ENCODE measurements at regions of chr22 and their contacts with region 1.

Region 1: GRCh38 chr22:21712894-21713712 is 22.5 kb downstream of the YPEL1 start:
- DNase-seq: peak in 2 of 3 donors; percentile 60 to 75
- ATAC-seq: peak; percentile 90
- H3K4me3 ChIP-seq: no peak overlapping the region
- H3K4me1 ChIP-seq: no peaks in the 10 kb centered on the region
- CTCF ChIP-seq: peak; percentile 23

Region 2: GRCh38 chr22:21942407-21943343 is 229.6 kb after region 1 on chr22:
- intact Hi-C with region 1: loop called in 1 of 2 experiments (anchors 5 kb)
- DNase-seq: peak; percentile 29 to 77 (median 54)
- ATAC-seq: no peak
- H3K4me3 ChIP-seq: no peak overlapping the region
- H3K4me1 ChIP-seq: peaks cover 12% of the 10 kb centered on the region
- CTCF ChIP-seq: no peak

Region 3: DNA sequence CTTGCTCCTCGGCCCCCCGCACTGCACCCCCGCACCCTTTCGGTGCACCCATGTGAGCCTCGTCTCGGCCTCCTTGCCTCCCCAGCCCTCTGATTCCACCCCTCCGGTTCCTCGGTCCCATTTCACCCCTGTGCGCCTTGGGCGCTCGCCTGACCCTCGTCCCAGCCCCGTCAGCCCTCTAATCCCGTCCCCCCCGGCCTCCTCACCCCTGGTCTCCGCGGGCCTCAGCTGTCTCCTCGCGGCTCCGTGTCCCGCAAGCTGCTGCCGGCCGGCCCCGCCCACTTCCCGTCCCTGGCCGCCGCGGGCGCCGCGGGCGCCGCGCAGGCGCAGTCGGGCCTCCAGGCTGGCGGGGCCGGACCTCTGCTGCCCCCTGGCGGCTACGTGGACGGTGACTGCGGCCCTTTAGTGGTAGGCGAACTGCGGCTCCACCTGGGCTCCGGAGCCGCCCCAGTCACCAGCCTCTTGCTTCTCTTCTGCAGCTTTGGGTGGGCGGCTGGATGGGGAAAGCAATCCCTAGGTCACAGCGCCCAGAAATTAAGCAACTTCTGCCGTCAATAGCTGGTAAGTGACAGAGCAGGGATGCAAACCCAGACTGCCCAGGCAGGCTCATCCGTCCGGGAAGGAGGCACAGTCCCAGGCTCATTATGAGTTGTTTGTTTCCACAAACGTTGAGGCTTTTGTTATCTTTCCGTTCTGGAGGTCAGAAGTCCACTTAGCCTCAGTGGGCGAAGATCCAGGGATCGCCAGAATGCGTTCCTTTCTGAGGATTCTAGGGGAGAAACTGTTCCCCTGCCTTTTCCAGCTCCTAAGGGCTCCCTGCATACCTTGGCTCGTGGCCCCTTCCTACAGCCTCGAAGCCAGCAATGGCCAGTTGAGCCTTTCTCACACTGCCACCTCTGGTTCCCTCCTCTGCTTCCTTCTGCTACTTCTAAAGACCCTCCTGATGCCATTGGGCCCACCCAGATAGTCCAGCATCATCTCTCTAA is 239.8 kb after region 1 on chr22 and contains the start of gene PPM1F:
- intact Hi-C with region 1: loop called in 1 of 2 experiments (anchors 5 kb)
- DNase-seq: peak; percentile 89 to 94 (median 91)
- ATAC-seq: peak; percentile 98
- H3K4me3 ChIP-seq: peak within 1 kb of the TSS; percentile 19
- H3K4me1 ChIP-seq: peaks cover 8% of the 10 kb centered on the region
- CTCF ChIP-seq: peak; percentile 88
- total RNA-seq, gene PPM1F: 10.5 to 27.5 (median 14.8) TPM